PC-9 (cell line): ENCODE measurements at regions of chr9 and their contacts with region 1.

Region 1: GRCh38 chr9:109098171-109098959 is 21.4 kb downstream of the TMEM245 start:
- DNase-seq: peak; percentile 48 to 75
- H3K4me3 ChIP-seq: peak overlapping the region; percentile 9; the same call in 1 of the 2 replicates
- H3K27ac ChIP-seq: peak overlapping the region; percentile 93
- H3K4me1 ChIP-seq: peaks cover 68% of the 10 kb centered on the region
- H3K27me3 ChIP-seq: no peaks in the 10 kb centered on the region
- CTCF ChIP-seq: peak; percentile 36; the same call in 1 of the 2 replicates

Region 2: GRCh38 chr9:108913391-108913790 is 185.0 kb before region 1 on chr9:
- CTCF ChIA-PET with region 1: no interaction called
- POLR2A ChIA-PET with region 1: no interaction called
- intact Hi-C with region 1: no loop called
- DNase-seq: no peak
- H3K4me3 ChIP-seq: no peak overlapping the region
- H3K27ac ChIP-seq: no peak overlapping the region
- H3K4me1 ChIP-seq: no peaks in the 10 kb centered on the region
- H3K27me3 ChIP-seq: no peaks in the 10 kb centered on the region
- CTCF ChIP-seq: no peak

Region 3: GRCh38 chr9:109064963-109065711 is 33.2 kb before region 1 on chr9:
- CTCF ChIA-PET with region 1: no interaction called
- POLR2A ChIA-PET with region 1: no interaction called
- intact Hi-C with region 1: loop called (anchors 1 kb)
- DNase-seq: peak; percentile 35 to 98
- H3K4me3 ChIP-seq: no peak overlapping the region
- H3K27ac ChIP-seq: peak overlapping the region; percentile 94
- H3K4me1 ChIP-seq: peaks cover 58% of the 10 kb centered on the region
- H3K27me3 ChIP-seq: no peaks in the 10 kb centered on the region
- CTCF ChIP-seq: no peak

Region 4: GRCh38 chr9:109251080-109251775 is 152.9 kb after region 1 on chr9:
- CTCF ChIA-PET with region 1: no interaction called
- POLR2A ChIA-PET with region 1: no interaction called
- intact Hi-C with region 1: loop called (anchors 10 kb)
- DNase-seq: peak; percentile 50 to 90
- H3K4me3 ChIP-seq: peak overlapping the region; percentile 33; the same call in 1 of the 2 replicates
- H3K27ac ChIP-seq: peak overlapping the region; percentile 95
- H3K4me1 ChIP-seq: peaks cover 79% of the 10 kb centered on the region
- H3K27me3 ChIP-seq: no peaks in the 10 kb centered on the region
- CTCF ChIP-seq: no peak

Region 5: DNA sequence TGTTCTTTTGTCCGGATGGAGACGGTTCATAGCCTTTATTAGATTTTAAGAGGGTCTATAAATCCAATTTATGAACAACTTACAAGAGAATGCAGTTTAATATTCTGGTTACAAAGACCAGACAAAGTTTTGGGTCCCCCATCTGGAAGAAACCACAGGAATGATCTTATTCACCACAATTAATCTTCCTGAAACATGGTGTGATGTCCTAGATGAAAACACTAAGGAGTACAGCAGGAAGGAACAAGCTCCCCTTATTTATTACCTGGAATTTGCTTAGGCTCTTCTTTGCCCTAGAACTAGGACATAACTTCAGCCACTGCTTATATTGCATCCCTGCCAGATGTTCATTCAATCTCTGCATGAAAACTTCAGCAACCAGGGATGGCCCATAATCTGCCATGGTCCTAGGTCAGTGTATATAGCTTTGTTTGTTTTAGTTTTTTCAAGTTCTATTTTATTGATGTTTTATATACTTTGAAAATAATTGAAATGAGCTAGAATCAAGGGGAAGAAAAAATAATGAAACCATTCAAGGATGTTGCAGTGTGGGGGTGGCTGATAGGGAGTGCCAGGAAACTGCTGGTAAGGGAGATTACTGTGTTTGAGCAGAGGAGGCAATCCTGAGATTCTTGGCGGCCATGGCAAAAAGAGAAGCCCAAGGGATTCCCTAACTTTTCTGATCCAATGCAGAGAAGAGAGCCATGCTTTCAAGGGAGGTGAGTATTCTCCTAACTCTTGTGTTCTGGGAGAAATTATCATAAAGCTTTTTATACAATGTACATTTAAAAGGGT is 1222.5 kb after region 1 on chr9:
- CTCF ChIA-PET with region 1: no interaction called
- POLR2A ChIA-PET with region 1: no interaction called
- intact Hi-C with region 1: no loop called
- DNase-seq: no peak
- H3K4me3 ChIP-seq: no peak overlapping the region
- H3K27ac ChIP-seq: no peak overlapping the region
- H3K4me1 ChIP-seq: no peaks in the 10 kb centered on the region
- H3K27me3 ChIP-seq: no peaks in the 10 kb centered on the region
- CTCF ChIP-seq: no peak